PC-3 (cell line): ENCODE measurements at regions of chr13 and their contacts with region 1.

Region 1: GRCh38 chr13:94435604-94436226 is 43.8 kb downstream of the DCT start:
- DNase-seq: peak; percentile 71
- ATAC-seq: peak; percentile 75
- H3K4me3 ChIP-seq: no peak overlapping the region
- H3K27ac ChIP-seq: no peak overlapping the region
- H3K4me1 ChIP-seq: no peaks in the 10 kb centered on the region
- H3K27me3 ChIP-seq: no peaks in the 10 kb centered on the region
- CTCF ChIP-seq: peak; percentile 73

Region 2: DNA sequence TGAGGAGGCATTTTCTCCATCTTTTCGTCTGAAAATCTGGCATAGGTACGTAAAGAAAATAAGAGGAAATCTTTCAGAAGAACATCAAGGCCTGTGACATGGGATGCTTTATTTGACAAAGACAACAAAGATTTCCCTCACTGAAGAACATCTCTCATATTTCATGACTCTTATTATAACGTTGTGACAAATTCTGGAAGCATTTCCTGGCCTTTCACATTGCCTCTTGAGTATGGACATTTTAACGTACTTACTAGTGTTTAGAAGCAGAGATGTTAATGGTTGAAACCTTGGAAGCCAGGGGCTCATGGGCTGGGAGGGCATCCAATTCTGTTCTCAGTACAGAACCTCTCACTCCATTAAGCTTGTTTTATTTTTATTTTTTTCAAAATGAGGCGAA is 167.1 kb before region 1 on chr13:
- CTCF ChIA-PET with region 1: no interaction called
- POLR2A ChIA-PET with region 1: no interaction called
- intact Hi-C with region 1: no loop called
- DNase-seq: peak; percentile 11
- ATAC-seq: peak; percentile 39; the same call in 1 of the 2 replicates
- H3K4me3 ChIP-seq: no peak overlapping the region
- H3K27ac ChIP-seq: no peak overlapping the region
- H3K4me1 ChIP-seq: peaks cover 7% of the 10 kb centered on the region
- H3K27me3 ChIP-seq: no peaks in the 10 kb centered on the region
- CTCF ChIP-seq: no peak

Region 3: GRCh38 chr13:94400874-94401273 is 34.8 kb before region 1 on chr13:
- CTCF ChIA-PET with region 1: no interaction called
- POLR2A ChIA-PET with region 1: no interaction called
- intact Hi-C with region 1: loop called (anchors 2 kb)
- DNase-seq: no peak
- ATAC-seq: no peak
- H3K4me3 ChIP-seq: no peak overlapping the region
- H3K27ac ChIP-seq: no peak overlapping the region
- H3K4me1 ChIP-seq: no peaks in the 10 kb centered on the region
- H3K27me3 ChIP-seq: no peaks in the 10 kb centered on the region
- CTCF ChIP-seq: no peak

Region 4: GRCh38 chr13:94513026-94513425 is 77.3 kb after region 1 on chr13:
- CTCF ChIA-PET with region 1: no interaction called
- POLR2A ChIA-PET with region 1: interaction called, 18 read pairs
- intact Hi-C with region 1: no loop called
- DNase-seq: no peak
- ATAC-seq: no peak
- H3K4me3 ChIP-seq: no peak overlapping the region
- H3K27ac ChIP-seq: no peak overlapping the region
- H3K4me1 ChIP-seq: no peaks in the 10 kb centered on the region
- H3K27me3 ChIP-seq: no peaks in the 10 kb centered on the region
- CTCF ChIP-seq: no peak

Region 5: DNA sequence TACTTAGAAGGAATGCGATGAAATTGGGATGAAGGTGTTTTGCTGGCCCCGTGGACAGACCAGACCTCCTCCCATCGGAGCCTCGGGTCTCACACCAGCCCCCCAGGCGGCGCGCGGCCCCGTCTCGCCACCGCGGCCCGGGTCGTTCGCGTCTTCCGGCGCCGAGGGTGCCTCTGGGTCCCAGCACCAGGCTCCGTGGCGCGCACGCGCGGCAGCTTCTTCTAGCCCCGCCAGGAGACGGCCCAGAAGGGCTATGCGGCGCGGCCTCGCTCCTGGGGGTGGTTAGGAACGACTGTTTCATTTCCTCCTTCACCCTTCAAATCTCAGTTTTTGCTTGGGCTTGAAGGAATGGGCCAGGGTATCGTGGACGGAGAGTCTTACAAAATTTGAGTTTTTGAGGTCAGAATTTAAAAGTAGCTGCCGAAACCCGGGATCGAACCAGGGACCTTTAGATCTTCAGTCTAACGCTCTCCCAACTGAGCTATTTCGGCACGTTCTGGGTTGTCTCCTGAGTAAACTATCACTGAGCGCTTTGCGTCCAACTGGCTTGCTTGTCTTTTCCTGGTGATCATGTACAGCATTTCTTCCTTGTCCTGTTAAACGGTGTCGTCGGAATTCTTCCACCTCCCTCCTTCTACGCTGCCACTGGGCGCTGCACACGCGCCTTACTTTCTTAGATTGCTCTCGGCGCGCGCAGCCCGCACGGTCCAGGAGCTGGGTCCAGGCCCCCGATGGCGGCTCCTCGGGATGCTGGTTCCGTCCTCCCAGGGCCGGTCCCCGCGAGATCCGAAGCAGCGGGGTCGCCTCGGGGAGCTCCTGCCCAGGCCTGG is 113.7 kb after region 1 on chr13:
- CTCF ChIA-PET with region 1: no interaction called
- POLR2A ChIA-PET with region 1: no interaction called
- intact Hi-C with region 1: loop called (anchors 5 kb)
- DNase-seq: peak; percentile 92
- ATAC-seq: peak; percentile 86
- H3K4me3 ChIP-seq: peak overlapping the region; percentile 85
- H3K27ac ChIP-seq: peak overlapping the region; percentile 58
- H3K4me1 ChIP-seq: peaks cover 8% of the 10 kb centered on the region
- H3K27me3 ChIP-seq: no peaks in the 10 kb centered on the region
- CTCF ChIP-seq: no peak

Region 6: DNA sequence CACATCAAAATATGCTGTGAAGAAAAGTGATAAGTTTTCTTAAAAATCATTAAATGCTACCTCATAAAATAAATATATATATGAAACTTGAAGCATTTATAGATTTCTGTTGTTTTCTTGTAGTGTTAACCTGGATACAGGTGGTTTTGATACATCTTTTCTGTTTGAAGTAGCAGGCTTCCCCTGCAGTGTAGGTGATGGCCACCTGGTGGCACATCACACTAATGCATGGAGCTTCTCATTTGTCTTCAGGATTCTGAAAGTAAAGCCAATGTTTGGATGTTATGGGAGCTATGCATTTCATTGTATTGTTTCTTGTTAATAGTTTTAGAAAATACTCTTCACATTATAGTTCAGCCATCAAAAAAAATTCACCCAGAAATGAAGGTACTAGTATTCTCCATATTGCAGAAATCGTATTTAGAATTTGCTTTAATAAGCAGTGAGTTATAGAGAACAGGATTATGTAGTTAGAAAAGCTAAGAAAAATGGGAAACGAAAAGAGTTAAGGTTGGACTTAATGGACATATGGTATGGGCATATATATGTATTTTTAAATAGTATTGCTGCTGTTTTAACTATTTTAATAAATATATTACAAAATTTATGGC is 184.7 kb after region 1 on chr13:
- CTCF ChIA-PET with region 1: interaction called, 9 read pairs
- POLR2A ChIA-PET with region 1: no interaction called
- intact Hi-C with region 1: loop called (anchors 1 kb)
- DNase-seq: peak; percentile 61
- ATAC-seq: peak; percentile 67
- H3K4me3 ChIP-seq: no peak overlapping the region
- H3K27ac ChIP-seq: no peak overlapping the region
- H3K4me1 ChIP-seq: no peaks in the 10 kb centered on the region
- H3K27me3 ChIP-seq: no peaks in the 10 kb centered on the region
- CTCF ChIP-seq: peak; percentile 83